ENCODE measurements at regions of chr10 and their contacts with region 1.

Region 1: DNA sequence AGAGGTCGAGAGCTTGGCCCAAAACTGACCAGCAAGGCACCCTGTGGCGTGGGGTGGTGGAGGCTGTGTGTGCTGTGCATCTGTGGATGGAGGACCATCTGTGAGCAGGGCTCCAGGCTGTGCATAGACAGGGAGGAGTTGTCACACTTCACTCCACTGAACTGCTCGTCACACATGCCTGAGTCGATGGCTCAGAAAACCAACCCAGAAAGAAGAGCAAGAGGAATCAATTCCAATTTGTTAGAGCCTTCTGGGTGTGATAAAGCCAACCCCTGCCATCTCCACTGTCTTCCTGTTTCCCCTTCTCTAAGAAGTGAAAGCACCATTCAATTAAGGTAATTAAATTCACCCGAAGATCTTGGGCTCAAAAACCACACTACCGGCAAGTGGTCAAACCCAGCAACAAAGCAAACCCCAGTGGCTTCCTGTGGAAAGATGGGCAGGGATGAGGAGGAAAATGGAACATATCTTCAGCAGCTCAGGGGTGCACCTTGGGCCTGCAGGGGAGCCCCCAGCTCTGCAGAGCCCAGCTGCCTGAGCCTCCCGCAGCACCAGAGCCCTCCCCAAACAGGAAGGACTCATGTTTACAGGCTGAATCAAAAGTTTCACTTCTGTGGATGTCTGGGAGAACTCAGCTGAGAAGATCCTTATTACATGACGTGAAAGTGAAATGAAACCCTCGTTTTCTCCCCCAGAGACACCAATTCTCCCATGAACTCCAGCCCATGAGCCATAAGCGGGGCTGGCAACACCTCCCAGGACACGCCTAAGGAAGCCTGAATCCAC is 10.8 kb downstream of the C10orf71 start:
- DNase-seq: peak; percentile 34
- H3K4me3 Mint-ChIP-seq: peak overlapping the region; percentile 1
- H3K27ac Mint-ChIP-seq: peak overlapping the region; percentile 59
- H3K4me1 Mint-ChIP-seq: peaks cover 24% of the 10 kb centered on the region
- H3K27me3 Mint-ChIP-seq: peaks cover 13% of the 10 kb centered on the region

Region 2: DNA sequence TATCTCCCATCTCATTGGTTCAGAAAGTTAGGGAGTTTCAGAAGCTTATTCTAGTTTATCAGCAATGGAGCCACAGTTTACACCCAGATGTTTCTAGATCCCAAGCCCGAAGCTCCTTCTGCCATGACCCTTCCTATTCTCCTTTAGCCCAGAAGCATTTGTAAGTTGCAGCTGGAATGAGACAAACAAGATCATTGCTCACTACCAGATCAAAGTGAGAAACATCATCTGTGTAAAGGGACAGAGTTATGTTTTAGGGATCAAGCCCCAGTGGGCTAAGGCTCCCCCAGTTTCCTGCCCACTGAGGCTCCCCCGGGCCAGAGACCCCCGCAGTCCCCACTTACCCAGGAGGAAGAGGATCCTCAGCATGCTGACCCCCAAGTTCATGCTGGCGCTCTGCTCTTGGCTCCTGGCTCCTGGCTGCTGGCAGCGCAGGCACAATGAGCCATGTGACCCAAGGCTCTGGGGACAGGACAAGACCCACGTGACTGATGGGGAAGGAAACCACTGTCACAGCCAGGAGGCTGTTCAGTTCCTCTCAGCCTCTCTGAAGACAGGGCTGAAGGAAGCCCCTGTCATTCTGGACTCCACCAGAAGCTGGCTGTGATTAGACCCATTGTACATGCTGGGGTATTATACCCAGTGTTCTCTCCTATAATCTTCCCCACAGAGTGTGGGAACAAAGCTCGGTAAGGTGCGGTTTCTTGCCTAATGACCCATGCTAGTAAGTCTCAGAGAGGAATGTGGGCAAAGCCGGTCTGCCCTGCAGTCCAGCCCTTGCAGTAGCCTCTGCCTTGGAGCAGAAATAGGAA is 121.7 kb before region 1 on chr10 and contains the start of gene TMEM273:
- intact Hi-C with region 1: loop called (anchors 2 kb)
- DNase-seq: no peak
- H3K4me3 Mint-ChIP-seq: peak within 1 kb of the TSS; percentile 85
- H3K27ac Mint-ChIP-seq: peak within 1 kb of the TSS; percentile 83
- H3K4me1 Mint-ChIP-seq: peaks cover 77% of the 10 kb centered on the region
- H3K27me3 Mint-ChIP-seq: peaks cover 2% of the 10 kb centered on the region
- total RNA-seq, gene TMEM273: 53.2 and 58.4 TPM in 2 replicates

Region 3: DNA sequence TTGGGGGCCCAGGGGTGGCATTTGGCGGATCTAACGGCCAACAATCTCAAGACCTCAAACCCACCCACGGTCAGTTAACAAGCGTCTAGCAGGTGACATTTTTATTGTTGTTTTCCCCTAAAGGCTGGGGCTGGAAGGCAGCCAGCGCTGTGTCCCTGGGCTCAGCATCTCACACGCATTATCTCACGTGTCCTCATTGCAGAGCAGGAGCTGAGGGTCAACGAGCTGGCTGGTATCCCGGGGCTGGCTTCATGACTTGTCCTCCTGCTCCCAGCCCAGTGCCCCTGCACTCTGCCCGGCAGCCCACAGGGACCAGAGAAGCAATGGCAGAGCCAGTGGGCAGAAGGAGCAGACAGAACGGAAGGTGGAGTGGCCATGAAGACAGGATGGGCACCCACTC is 67.2 kb before region 1 on chr10:
- intact Hi-C with region 1: no loop called
- DNase-seq: no peak
- H3K4me3 Mint-ChIP-seq: no peak overlapping the region
- H3K27ac Mint-ChIP-seq: no peak overlapping the region
- H3K4me1 Mint-ChIP-seq: no peaks in the 10 kb centered on the region
- H3K27me3 Mint-ChIP-seq: peaks cover 34% of the 10 kb centered on the region

Region 4: GRCh38 chr10:49347827-49348226 is 38.0 kb after region 1 on chr10:
- intact Hi-C with region 1: no loop called
- DNase-seq: no peak
- H3K4me3 Mint-ChIP-seq: no peak overlapping the region
- H3K27ac Mint-ChIP-seq: no peak overlapping the region
- H3K4me1 Mint-ChIP-seq: no peaks in the 10 kb centered on the region
- H3K27me3 Mint-ChIP-seq: peaks cover 10% of the 10 kb centered on the region

Region 5: DNA sequence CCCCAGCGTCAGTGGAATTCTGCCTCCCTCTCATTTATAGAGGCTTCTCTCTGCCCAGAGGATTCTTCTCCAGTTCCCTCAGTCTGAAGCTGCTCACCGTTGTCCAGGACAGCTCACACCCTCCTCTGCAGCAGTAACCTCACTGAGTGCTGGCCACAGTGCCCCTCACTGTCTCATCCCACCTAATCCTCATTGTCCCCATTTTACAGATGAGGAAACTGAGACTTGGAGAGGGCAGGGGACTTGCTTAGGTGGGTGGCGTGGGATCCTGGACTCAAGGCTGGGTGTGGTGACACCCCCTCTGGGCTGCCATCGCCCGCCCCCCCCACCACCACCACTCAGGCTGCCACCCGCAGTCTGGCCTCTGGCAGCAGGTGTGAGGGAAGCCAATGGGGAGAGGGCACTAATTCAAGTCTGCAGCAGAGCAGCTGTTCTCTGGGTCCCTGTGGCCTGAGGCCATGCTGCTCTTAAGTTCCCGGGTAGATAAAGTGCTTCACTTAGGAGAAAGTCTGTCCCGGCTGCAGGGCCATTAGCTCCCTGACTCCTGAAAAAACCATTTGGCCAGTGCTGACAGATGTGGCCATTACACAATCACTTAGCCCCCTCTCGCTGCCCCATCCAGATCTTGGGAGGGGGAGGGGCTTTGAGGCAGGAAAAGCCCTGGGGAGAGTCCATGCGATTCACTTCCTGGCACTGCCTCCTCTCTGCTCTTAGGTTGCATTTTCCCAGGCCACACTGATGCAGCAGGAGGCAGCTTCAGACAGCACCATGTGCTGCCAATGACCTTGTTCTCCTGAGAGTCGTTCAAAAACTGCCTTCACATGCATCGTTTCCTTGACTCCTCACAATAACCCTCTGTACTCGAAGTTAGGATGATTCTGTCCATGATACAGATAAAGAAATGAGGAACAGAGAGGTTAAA is 49.8 kb after region 1 on chr10:
- intact Hi-C with region 1: loop called (anchors 5 kb)
- DNase-seq: no peak
- H3K4me3 Mint-ChIP-seq: no peak overlapping the region
- H3K27ac Mint-ChIP-seq: no peak overlapping the region
- H3K4me1 Mint-ChIP-seq: peaks cover 5% of the 10 kb centered on the region
- H3K27me3 Mint-ChIP-seq: peaks cover 4% of the 10 kb centered on the region

Region 6: GRCh38 chr10:49538381-49539319 is 228.8 kb after region 1 on chr10 and contains the start of gene ERCC6:
- intact Hi-C with region 1: loop called (anchors 10 kb)
- DNase-seq: peak; percentile 96
- H3K4me3 Mint-ChIP-seq: peak within 1 kb of the TSS; percentile 89
- H3K27ac Mint-ChIP-seq: peak within 1 kb of the TSS; percentile 94
- H3K4me1 Mint-ChIP-seq: peaks cover 36% of the 10 kb centered on the region
- H3K27me3 Mint-ChIP-seq: peaks cover 3% of the 10 kb centered on the region
- total RNA-seq, gene ERCC6: 22.7 and 26.2 TPM in 2 replicates